Left cardiac atrium (tissue), 4 donors: ENCODE measurements at regions of chr2 and their contacts with region 1.

Region 1: GRCh38 chr2:236180831-236181453 is 12.8 kb upstream of the GBX2 start:
- DNase-seq: peak; percentile 58
- ATAC-seq: peak in 1 of 2 donors; percentile 68

Region 2: DNA sequence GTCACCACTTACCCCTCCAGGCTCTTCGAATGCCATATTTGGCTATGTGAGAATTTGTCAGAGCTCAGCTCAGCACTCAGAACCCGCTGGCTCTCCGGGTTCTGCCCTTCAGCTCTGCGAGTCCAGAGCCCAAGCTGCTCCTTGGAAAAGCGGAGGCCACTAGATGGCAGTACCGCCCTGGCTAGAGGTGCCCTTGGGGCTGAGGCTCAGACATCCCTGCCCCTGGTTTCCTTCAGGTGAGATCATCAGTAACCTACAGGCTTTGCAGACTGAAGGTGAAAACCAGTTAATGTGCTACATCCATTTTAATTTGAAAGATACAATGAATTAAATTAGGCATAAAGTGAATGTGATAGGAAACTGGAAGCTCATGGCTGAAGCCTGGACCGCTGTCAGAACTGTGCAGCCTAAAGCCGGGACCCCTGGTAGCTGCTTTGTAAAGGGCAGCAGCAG is 401.5 kb before region 1 on chr2:
- intact Hi-C with region 1: loop called (anchors 5 kb)
- DNase-seq: peak; percentile 76
- ATAC-seq: peak; percentile 89 to 92

Region 3: GRCh38 chr2:235802538-235803427 is 378.2 kb before region 1 on chr2:
- intact Hi-C with region 1: loop called in 1 of 2 experiments (anchors 10 kb)
- DNase-seq: no peak
- ATAC-seq: no peak

Region 4: DNA sequence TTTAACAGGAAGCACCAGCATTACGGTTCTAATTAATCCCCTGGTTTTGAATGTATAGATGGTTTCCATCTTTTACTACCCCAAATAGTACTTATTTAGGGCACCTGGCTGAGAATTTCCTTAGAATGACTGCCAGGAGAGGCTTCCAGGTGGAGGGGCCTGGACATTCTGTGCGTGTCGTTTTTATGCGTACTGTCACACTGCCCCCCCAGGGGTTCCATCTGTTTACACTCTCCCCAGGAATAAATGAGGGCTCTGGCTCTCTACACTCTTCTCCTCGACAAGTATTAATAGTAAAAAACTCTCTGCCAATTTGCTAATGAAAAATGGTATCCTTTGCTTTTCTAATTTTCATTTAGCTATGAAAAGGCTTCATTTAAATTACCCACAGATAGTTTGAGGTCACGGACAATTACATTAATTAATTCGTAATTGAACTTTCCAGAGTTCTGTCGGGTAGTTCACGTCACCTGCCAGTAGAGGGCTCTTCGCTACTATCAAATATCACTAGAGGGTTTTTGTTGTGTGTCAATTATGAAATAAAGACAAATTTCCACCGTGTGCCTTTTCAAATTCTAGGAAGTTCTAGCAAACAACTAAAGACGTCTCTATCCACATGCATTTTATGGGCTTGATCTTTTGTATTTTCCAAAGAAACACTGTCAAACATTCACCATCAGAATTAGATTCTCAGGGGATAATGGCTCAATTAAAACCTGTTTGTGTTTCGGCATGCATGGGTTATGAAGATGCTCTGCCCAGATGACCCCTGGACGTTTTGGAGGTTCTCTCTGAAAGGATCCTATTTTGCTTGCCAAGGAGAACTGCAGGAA is 172.0 kb after region 1 on chr2:
- intact Hi-C with region 1: no loop called
- DNase-seq: no peak
- ATAC-seq: no peak